ENCODE measurements at regions of chr4 and their contacts with region 1.

Region 1: DNA sequence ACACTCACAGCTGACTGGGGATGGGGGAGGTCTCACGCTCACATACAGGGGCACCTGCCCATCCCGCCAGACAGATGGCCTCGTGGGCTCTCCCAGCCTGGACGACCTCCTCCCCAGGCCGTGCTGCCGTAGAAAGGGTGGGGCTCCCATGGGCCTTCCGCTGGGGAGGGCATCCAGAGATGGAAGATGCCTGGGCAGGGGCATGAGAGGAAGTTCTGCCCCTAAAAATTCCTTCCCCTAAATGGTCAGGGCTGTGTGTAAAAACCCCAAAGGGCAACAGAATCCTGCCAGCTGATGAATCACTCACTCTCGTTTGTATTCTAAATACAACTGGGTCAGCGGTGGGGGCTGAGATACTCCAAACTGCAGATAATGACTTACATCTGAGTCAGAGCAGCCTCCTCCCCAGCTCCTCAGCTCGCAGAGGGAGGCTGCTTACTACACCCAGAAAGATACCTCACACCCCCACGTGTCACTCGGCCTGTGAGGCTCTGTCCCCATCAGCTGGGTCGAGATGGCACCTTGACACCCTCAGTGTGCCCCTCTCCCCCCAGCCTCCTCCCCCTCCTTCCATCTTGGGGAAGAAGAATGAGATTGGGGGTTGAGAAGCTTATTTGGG is 10.1 kb downstream of the WDR1 start:
- DNase-seq: peak; percentile 83 to 97
- H3K4me3 ChIP-seq: peak overlapping the region; percentile 32 to 48
- H3K27ac ChIP-seq: peak overlapping the region; percentile 89 to 93
- H3K4me1 ChIP-seq: peaks cover 59 to 97% of the 10 kb centered on the region in 2 donors
- H3K27me3 ChIP-seq: no peaks in the 10 kb centered on the region
- CTCF ChIP-seq: no peak

Region 2: GRCh38 chr4:10096201-10096977 is 10.1 kb before region 1 on chr4:
- intact Hi-C with region 1: loop called (anchors 1 kb)
- DNase-seq: peak; percentile 75 to 89
- H3K4me3 ChIP-seq: no peak overlapping the region
- H3K27ac ChIP-seq: peak overlapping the region; percentile 80 to 93
- H3K4me1 ChIP-seq: peaks cover 69 to 88% of the 10 kb centered on the region in 2 donors
- H3K27me3 ChIP-seq: no peaks in the 10 kb centered on the region
- CTCF ChIP-seq: no peak

Region 3: GRCh38 chr4:10413177-10413576 is 306.6 kb after region 1 on chr4:
- intact Hi-C with region 1: no loop called
- DNase-seq: no peak
- H3K4me3 ChIP-seq: no peak overlapping the region
- H3K27ac ChIP-seq: no peak overlapping the region
- H3K4me1 ChIP-seq: no peaks in the 10 kb centered on the region
- H3K27me3 ChIP-seq: no peaks in the 10 kb centered on the region
- CTCF ChIP-seq: no peak

Measured in ascending aorta (tissue), 2 donors.